Activated CD8-positive, alpha-beta T cell treated with anti-CD3 and anti-CD28 coated beads, Interleukin-2, amount 10 ng/mL, durations not matched to agents 7 days and 5 days (primary cell): ENCODE measurements at regions of chr12 and their contacts with region 1.

Region 1: GRCh38 chr12:122123051-122123760 is 44.6 kb downstream of the MLXIP start:
- DNase-seq: peak; percentile 80
- ATAC-seq: peak; percentile 62
- H3K4me3 Mint-ChIP-seq: no peak overlapping the region
- H3K27ac Mint-ChIP-seq: peak overlapping the region; percentile 67
- H3K4me1 Mint-ChIP-seq: peaks cover 33% of the 10 kb centered on the region
- H3K27me3 Mint-ChIP-seq: no peaks in the 10 kb centered on the region

Region 2: DNA sequence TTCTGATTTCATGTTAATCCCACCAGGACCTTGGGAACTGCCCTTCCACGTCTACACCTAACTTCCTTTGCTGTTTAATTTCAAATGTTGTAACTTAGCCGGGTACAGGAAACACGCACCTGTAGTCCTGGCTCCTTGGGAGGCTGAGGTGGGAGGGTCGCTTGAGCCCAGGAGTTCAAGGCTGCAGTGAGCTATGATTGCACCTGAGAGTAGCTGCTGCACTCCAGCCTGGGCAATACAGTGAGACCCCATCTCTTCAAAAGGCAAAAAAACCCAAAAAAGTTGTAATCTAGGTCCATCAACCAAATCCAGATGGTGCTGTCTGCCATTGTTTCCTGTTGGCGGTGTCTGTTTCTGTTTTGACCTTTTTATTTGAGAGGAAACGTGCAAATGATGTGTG is 87.1 kb before region 1 on chr12:
- CTCF ChIA-PET with region 1: interaction called, 12 read pairs
- POLR2A ChIA-PET with region 1: no interaction called
- DNase-seq: no peak
- ATAC-seq: no peak
- H3K4me3 Mint-ChIP-seq: no peak overlapping the region
- H3K27ac Mint-ChIP-seq: no peak overlapping the region
- H3K4me1 Mint-ChIP-seq: no peaks in the 10 kb centered on the region
- H3K27me3 Mint-ChIP-seq: no peaks in the 10 kb centered on the region

Region 3: GRCh38 chr12:122064025-122064777 is 59.0 kb before region 1 on chr12:
- CTCF ChIA-PET with region 1: interaction called, 16 read pairs
- POLR2A ChIA-PET with region 1: no interaction called
- DNase-seq: peak; percentile 50
- ATAC-seq: peak; percentile 73
- H3K4me3 Mint-ChIP-seq: no peak overlapping the region
- H3K27ac Mint-ChIP-seq: peak overlapping the region; percentile 22
- H3K4me1 Mint-ChIP-seq: peaks cover 33% of the 10 kb centered on the region
- H3K27me3 Mint-ChIP-seq: no peaks in the 10 kb centered on the region

Region 4: DNA sequence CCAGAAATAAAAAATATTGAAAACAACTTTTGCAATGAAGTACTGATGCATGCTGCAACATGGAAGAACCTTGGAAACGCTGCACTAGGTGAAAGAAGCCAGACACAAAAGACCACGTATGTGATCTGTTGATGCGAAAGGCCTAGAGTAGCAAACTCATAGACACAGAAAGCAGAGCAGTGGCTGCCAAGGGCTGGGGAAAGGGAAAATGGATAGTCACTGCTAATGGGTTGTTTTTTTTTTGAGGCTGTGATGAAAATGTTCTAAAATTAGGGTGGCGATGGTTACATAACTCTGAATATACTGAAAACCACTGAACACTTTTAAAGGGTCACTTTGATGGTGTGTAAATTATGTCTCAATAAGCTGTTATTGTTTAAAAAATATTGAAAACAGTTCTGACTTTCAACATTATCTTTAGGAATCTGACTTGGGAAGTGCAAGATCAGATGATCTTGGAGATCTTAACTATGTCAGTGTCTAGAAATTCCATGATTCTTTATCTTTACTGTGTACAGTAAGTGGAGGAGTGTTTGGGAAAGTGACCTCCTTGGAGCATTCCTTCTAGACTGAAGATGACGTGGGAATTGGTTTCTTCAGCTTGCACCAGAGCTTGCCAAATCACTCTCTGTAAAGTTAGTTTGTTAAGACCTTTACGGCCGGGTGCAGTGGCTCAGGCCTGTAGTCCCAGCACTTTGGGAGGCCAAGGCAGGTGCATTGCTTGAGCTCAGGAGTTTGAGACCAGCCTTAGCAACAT is 32.3 kb before region 1 on chr12:
- CTCF ChIA-PET with region 1: interaction called, 29 read pairs
- POLR2A ChIA-PET with region 1: interaction called, 3 read pairs
- DNase-seq: no peak
- ATAC-seq: no peak
- H3K4me3 Mint-ChIP-seq: no peak overlapping the region
- H3K27ac Mint-ChIP-seq: peak overlapping the region; percentile 58
- H3K4me1 Mint-ChIP-seq: peaks cover 50% of the 10 kb centered on the region
- H3K27me3 Mint-ChIP-seq: no peaks in the 10 kb centered on the region

Region 5: GRCh38 chr12:122107261-122107660 is 15.9 kb before region 1 on chr12:
- CTCF ChIA-PET with region 1: interaction called, 13 read pairs
- POLR2A ChIA-PET with region 1: no interaction called
- DNase-seq: no peak
- ATAC-seq: no peak
- H3K4me3 Mint-ChIP-seq: no peak overlapping the region
- H3K27ac Mint-ChIP-seq: peak overlapping the region; percentile 48
- H3K4me1 Mint-ChIP-seq: peaks cover 64% of the 10 kb centered on the region
- H3K27me3 Mint-ChIP-seq: no peaks in the 10 kb centered on the region